ENCODE measurements at regions of chr19 and their contacts with region 1.

Region 1: DNA sequence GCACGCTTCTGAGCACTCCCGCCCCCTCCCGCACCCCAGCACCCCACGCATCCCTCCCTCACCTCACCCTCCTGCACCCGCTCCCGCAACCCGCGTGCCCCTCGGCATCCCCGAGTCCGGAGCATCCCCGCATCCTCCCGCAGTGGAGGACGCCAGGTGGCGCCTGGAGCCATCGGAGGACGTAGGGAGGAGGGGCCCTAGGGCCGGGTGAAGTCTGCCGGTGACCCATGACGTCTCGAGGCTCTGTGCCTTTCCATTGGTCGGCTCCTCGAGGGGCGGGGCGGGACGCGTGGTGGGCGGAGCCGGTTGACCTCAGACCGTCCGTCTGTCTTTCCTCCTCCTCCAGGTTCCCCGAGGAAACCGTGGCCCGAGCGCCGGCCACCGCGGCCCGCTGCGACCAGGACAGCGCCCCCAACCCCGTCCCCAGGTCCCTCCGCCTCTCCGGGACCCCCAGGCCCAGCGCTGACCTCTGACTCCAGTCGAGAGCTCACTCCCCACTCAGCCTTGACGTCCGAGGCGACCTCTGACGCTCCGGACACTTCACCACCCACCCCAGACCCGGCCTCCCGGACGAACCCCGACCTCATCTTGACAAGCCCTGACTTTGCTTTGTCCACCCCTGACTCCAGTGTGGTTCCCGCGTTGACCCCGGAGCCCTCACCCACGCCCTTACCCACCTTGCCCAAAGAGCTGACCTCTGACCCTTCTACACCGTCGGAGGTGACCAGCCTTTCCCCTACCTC is 19.9 kb downstream of the SBK2 start:
- DNase-seq: peak; percentile 90 to 99 (median 96)
- ATAC-seq: peak; percentile 100
- H3K4me3 ChIP-seq: peak overlapping the region in 3 of 4 donors; percentile 26 to 59 (median 53)
- H3K27ac ChIP-seq: peak overlapping the region; percentile 57 to 81 (median 80)
- H3K4me1 ChIP-seq: no peaks in the 10 kb centered on the region
- H3K27me3 ChIP-seq: no peaks in the 10 kb centered on the region
- CTCF ChIP-seq: peak; percentile 57 to 68 (median 64)

Region 2: GRCh38 chr19:55372316-55373081 is 144.6 kb before region 1 on chr19:
- intact Hi-C with region 1: no loop called
- DNase-seq: peak in 1 of 6 donors; percentile 76
- ATAC-seq: no peak
- H3K4me3 ChIP-seq: no peak overlapping the region
- H3K27ac ChIP-seq: no peak overlapping the region
- H3K4me1 ChIP-seq: peaks cover 0 to 3% (median 0%) of the 10 kb centered on the region in 3 donors
- H3K27me3 ChIP-seq: peaks cover 0 to 19% (median 2%) of the 10 kb centered on the region in 4 donors
- CTCF ChIP-seq: no peak

Region 3: GRCh38 chr19:55605207-55605636 is 88.2 kb after region 1 on chr19:
- intact Hi-C with region 1: loop called in 1 of 3 experiments (anchors 5 kb)
- DNase-seq: peak; percentile 95 to 99 (median 97)
- ATAC-seq: peak; percentile 79 to 87 (median 84)
- H3K4me3 ChIP-seq: peak overlapping the region; percentile 71 to 89 (median 79)
- H3K27ac ChIP-seq: peak overlapping the region; percentile 69 to 90 (median 85)
- H3K4me1 ChIP-seq: peaks cover 0 to 20% (median 0%) of the 10 kb centered on the region in 3 donors
- H3K27me3 ChIP-seq: no peaks in the 10 kb centered on the region
- CTCF ChIP-seq: no peak

Region 4: DNA sequence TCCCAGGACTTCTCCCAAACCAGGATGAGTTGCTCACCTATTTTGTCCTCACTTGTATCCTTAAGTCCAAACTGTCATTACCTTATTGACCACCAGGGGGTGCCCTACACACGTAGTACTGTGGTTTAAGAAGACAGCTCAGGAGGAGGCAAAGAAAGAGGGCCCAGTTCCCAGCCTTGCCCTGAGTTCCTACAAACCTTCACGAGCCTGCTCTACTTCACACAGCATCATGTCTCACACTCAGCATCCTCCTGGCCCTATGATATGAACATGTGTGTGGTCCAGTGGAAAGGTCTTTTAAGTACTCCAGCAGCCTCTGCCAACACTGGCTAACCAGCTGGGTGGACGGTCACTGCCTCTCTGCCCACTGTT is 115.4 kb after region 1 on chr19:
- intact Hi-C with region 1: loop called in 2 of 3 experiments (anchors 5 kb)
- DNase-seq: peak in 4 of 6 donors; percentile 79 to 90 (median 86)
- ATAC-seq: peak; percentile 70 to 85 (median 78)
- H3K4me3 ChIP-seq: no peak overlapping the region
- H3K27ac ChIP-seq: no peak overlapping the region
- H3K4me1 ChIP-seq: peaks cover 0 to 15% (median 8%) of the 10 kb centered on the region in 3 donors
- H3K27me3 ChIP-seq: no peaks in the 10 kb centered on the region
- CTCF ChIP-seq: peak; percentile 80 to 95 (median 85)

Measured in pancreas (tissue), 10 donors.